Activated CD4-positive, alpha-beta memory T cell treated with anti-CD3 and anti-CD28 coated beads for 36 hours (primary cell): ENCODE measurements at regions of chr5 and their contacts with region 1.

Region 1: DNA sequence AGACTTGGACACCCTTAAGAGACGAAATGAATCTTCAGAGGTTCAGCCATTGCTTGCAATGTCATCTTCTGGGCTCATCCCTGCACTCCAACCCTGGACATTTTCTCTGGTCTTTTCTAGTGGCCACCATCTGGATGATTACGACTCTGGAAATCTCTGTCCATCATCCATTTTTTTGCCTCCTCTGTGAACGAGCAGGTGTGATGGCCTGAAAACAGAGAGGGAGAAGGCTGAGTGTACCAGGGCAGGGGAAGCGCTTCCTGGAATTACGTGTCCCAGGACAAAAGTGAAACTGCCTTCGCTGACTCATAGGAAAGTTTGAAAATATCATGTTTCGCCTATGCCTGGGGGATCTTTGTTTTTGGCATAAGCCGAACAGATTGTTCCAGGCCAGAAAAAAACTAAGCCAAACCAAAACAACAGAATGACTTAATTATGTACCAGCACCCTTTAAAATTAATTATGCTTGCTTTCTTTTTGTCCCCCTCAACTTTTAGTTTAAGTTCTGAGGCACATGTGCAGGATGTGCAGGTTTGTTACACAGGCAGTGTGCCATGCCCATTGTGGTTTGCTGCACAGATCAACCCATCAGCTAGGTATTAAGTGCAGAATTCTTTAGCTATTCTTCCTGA is 31.9 kb downstream of the ANKRD33B start:
- DNase-seq: peak; percentile 77
- H3K4me3 Mint-ChIP-seq: no peak overlapping the region
- H3K27ac Mint-ChIP-seq: peak overlapping the region; percentile 50
- H3K4me1 Mint-ChIP-seq: peaks cover 48% of the 10 kb centered on the region
- H3K27me3 Mint-ChIP-seq: no peaks in the 10 kb centered on the region

Region 2: DNA sequence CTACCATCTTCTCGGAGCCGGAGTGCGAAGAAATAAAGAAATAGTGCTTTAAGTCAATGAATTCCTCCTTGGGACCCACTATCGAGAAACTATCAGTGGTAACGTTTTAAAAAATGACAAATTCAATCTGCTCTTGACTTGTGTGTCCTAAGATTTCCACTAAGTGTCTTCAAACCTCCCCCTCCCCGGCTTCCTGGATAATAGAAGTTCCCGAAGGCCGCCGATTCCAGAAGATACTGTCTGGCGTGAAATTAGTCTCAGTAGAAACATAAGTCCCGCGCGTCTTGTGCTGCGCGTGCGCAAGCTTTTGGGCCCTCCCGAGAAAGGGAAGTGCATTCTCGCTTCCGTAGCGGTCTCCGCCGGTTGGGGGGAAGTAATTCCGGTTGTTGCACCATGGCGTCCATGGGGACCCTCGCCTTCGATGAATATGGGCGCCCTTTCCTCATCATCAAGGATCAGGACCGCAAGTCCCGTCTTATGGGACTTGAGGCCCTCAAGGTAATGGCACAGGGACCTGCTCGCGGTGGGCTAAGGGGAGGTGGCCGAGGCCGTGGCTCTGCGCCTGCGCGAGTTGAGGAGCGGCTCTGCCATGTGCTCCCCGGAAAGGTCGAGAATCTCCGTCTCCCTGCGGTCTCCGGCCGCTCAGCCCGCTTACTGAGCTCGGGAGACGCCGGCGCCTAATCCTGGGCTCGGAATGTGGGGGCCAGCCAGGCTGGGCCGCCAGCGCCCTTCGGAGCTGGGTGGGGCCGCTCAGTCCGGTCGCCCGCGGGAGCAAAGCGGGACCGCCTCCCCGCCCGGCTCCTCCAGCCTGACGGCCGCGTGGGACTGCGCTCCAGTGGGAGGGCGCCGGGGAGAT is 345.6 kb before region 1 on chr5 and contains the start of gene CCT5:
- CTCF ChIA-PET with region 1: no interaction called
- POLR2A ChIA-PET with region 1: no interaction called
- intact Hi-C with region 1: loop called (anchors 10 kb)
- DNase-seq: peak; percentile 93
- H3K4me3 Mint-ChIP-seq: peak within 1 kb of the TSS; percentile 84
- H3K27ac Mint-ChIP-seq: peak within 1 kb of the TSS; percentile 99
- H3K4me1 Mint-ChIP-seq: peaks cover 47% of the 10 kb centered on the region
- H3K27me3 Mint-ChIP-seq: no peaks in the 10 kb centered on the region
- total RNA-seq, gene CCT5: 360 to 375 TPM

Region 3: DNA sequence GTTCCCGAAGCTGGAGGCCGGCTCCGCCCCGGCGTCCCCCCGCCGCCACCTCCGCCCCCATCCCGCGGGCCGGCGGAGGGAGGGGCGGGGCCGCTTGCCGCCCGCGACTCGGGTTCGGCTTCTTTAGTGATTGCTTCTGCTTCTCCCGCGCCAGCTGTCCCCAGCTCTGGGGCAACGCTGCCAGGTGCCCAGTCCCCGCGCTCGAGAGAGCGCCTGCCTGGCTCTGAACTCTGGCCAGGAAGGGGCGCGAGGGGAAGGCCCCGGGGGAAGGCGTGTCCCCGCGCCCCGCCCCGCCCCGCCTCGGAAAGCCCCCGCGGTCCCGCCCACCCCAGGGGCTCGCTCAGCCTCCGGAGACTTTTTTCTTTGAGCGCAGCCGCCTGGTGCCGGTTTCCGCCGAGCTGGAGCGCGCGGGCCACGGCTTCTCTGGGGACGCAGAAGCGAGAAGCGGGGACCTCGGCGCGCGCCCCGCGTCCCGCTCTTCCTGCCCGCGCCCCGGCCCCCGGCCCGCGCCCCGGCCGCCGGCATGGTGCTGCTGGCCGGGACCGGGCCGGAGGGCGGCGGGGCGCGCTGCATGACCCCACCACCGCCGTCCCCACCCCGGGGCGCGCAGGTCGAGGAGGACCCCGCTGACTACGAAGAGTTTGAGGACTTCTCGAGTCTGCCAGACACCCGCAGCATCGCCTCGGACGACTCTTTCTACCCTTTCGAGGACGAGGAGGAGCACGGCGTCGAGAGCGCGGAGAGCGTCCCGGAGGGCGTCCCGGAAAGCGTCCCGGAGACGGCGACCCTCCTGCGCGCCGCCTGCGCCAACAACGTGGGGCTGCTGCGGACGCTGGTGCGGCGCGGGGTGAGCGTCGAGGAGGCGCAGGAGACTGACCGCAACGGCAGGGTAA is 31.6 kb before region 1 on chr5 and contains the start of gene ANKRD33B:
- CTCF ChIA-PET with region 1: no interaction called
- POLR2A ChIA-PET with region 1: no interaction called
- intact Hi-C with region 1: loop called (anchors 1 kb)
- DNase-seq: peak; percentile 88
- H3K4me3 Mint-ChIP-seq: peak within 1 kb of the TSS; percentile 84
- H3K27ac Mint-ChIP-seq: peak within 1 kb of the TSS; percentile 79
- H3K4me1 Mint-ChIP-seq: peaks cover 21% of the 10 kb centered on the region
- H3K27me3 Mint-ChIP-seq: peaks cover 3% of the 10 kb centered on the region
- total RNA-seq, gene ANKRD33B: 9.9 to 10.0 TPM

Region 4: DNA sequence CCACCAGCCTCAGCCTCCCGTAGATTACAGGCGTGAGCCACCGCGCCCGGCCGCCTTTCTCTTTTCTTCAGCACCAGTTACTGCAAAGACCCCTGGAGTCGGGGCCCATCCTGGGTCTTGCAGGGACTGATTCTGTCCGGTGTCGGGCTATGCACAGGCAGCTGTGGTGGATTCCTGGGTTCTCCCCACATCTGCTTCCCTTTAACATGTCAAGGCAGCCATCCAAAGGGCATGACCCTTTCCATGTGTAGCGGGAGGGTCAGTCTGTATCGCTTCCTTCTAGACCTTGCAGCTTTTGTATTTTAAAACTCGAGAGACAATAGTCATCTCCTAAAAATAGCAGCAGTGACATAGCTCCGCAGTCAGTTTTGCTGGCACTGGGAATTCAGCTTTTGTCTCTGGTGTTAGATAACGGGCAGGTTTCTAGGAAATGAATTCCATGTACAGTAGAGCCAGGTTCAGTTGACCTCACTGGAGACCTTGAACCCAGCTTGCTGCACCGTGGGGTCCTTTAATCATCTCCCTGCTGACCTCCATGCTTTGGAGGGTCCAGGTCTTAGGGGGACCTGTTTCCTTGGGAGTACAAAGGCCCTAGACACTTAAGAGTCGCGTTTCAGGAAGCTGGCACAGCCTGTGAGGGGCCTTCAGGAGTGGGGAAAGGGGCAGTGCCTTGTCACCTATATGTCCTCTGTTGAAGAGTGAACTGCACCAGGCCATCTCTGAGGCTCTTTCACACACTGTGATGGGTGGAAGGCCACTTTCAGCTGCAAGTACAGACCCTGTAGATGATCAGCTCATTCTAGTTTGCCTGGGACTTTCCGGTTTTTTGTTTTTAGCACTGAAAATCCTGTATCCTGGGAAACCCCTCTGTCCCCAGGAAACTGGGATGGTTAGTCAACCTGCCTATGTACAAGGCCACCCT is 18.2 kb before region 1 on chr5:
- CTCF ChIA-PET with region 1: interaction called, 4 read pairs
- POLR2A ChIA-PET with region 1: no interaction called
- intact Hi-C with region 1: loop called (anchors 1 kb)
- DNase-seq: no peak
- H3K4me3 Mint-ChIP-seq: no peak overlapping the region
- H3K27ac Mint-ChIP-seq: no peak overlapping the region
- H3K4me1 Mint-ChIP-seq: peaks cover 57% of the 10 kb centered on the region
- H3K27me3 Mint-ChIP-seq: no peaks in the 10 kb centered on the region